Lower leg skin (tissue), 4 donors: ENCODE measurements at regions of chr17 and their contacts with region 1.

Region 1: DNA sequence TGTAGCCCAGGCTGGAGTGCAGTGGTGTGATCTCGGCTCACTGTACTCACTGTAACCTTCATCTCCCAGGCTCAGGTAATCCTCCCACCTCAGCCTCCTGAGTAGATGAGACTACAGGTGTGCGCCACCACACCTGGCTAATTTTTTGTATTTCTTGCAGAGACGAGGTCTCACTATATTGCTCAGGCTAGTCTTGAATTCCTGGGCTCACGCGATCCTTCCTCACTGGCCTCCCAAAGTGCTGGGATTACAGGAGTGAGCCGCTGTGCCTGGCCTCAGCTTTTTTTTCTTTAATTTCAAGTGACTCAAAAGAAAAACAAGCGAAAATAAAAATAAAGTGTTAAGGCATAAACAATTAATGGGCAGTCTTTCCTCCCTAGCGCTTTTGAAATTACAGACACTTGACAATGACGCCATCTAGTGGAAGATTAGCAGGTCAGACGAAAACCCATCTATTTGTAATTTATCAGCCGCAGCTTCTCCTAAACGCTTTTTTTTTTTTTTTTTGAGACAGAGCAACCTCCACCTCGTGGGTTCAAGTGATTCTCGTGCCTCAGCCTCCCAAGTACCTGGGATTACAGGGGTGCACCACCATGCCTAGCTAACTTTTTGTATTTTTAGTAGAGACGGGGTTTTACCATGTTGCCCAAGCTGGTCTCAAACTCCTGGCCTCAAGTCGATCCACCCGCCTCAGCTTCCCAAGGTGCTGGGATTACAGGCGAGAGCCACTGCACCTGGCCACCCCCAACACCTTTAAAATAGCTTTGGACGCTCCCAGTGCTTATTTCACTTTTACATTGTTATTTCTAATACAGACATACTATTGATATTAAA is 28.1 kb upstream of the PECAM1 start:
- DNase-seq: peak in 1 of 2 donors; percentile 73
- H3K4me3 ChIP-seq: no peak overlapping the region
- CTCF ChIP-seq: peak in 1 of 3 donors; percentile 13
- POLR2A ChIP-seq: no peak

Region 2: DNA sequence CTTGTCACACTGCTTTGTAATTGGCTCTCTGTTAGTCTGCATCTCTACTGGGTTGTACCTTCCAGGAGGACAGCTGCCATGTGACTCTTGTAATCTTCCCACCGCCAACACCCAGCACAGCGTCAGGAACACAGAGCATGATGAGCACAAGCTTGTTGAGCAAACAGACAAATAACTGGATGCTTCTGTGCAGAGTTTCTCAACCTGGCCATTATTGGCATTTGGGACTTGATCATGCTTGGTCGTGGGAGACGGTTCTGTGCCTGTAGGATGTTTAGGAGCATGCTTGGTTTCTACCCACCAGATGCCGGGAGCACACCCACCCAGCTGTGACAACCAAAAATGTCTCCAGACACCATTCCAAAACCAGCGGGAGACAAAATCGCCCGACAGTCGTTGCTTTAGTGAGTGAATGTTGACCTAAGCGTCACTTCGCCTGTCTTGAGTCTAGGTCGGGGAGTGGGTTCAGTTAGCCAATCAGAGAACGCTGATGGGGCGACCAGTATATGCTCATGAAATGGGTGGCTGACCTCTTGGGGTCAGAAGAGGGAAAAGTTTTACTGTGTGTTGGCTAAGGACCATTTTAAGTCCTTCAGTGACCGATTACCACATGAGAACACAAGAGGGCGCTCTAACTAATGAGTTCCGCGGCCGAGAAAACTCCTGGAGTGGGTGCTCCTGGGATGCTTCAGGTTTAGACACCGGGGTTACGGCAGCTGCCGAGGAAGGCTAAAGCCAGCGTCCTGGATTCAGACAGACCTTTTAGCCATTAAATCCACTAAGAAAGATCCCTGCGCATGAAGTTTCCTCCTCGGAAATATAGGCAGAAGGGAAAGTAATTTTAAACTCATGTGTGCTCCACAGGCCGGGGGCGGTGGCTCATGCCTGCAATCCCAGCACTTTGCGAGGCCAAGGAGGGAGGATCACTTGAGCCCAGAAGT is 97.8 kb before region 1 on chr17:
- intact Hi-C with region 1: loop called (anchors 5 kb)
- DNase-seq: peak; percentile 63 to 93
- H3K4me3 ChIP-seq: no peak overlapping the region
- CTCF ChIP-seq: peak in 1 of 3 donors; percentile 32
- POLR2A ChIP-seq: no peak